Activated B cell treated with CpG ODN at 0.5 μM for 24 hours (primary cell): ENCODE measurements at regions of chr6 and their contacts with region 1.

Region 1: DNA sequence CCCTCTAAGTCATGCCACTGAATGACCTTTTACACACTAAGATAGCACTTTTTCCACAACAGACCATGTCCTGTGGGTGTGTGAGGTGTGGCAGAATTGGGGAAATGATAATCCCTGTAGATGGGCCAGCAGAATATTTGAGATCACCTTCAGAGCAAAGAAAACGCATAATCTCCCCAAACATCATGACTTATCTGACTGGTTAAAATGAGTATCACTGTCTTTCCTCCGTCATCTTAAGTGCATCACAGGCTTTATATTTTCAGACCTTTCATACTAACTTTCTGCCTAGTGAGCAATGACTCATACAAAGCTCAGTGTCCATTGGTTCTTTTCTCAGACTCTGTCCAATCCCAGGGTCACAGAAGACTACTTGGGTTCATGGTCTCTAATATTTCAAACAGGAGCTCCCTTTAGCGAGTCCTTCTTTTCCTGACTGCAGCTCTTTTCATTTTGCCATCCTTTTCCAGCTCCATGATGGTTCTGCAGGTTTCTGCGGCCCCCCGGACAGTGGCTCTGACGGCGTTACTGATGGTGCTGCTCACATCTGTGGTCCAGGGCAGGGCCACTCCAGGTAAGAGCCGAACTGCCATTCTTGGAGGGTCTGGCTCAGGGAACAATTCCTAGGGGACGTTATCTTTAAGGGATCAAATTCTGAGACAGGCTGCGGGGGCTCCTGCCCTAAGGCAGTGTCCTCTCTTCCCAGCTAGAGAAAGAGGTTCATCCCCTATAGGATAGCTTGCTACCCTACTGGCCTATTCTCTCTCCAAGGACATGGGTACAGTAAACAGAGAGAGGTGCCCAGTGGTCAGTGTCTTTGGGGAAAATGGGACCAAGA is at the start of gene HLA-DPB1:
- DNase-seq: peak; percentile 42
- ATAC-seq: peak; percentile 76
- H3K4me3 Mint-ChIP-seq: peak within 1 kb of the TSS; percentile 95
- H3K27ac Mint-ChIP-seq: peak within 1 kb of the TSS; percentile 99
- H3K4me1 Mint-ChIP-seq: peaks cover 66% of the 10 kb centered on the region
- H3K27me3 Mint-ChIP-seq: no peaks in the 10 kb centered on the region
- CTCF ChIP-seq: no peak
- total RNA-seq, gene HLA-DPB1: 853 and 854 TPM in 2 replicates

Region 2: GRCh38 chr6:32568561-32568960 is 507.2 kb before region 1 on chr6:
- CTCF ChIA-PET with region 1: no interaction called
- POLR2A ChIA-PET with region 1: no interaction called
- intact Hi-C with region 1: no loop called
- DNase-seq: no peak
- ATAC-seq: no peak
- H3K4me3 Mint-ChIP-seq: no peak overlapping the region
- H3K27ac Mint-ChIP-seq: no peak overlapping the region
- H3K4me1 Mint-ChIP-seq: peaks cover 4% of the 10 kb centered on the region
- H3K27me3 Mint-ChIP-seq: no peaks in the 10 kb centered on the region
- CTCF ChIP-seq: no peak

Region 3: GRCh38 chr6:33000055-33000454 is 75.7 kb before region 1 on chr6:
- CTCF ChIA-PET with region 1: interaction called, 5 read pairs
- POLR2A ChIA-PET with region 1: interaction called, 19 read pairs
- intact Hi-C with region 1: no loop called
- DNase-seq: no peak
- ATAC-seq: peak; percentile 92
- H3K4me3 Mint-ChIP-seq: peak overlapping the region; percentile 47
- H3K27ac Mint-ChIP-seq: peak overlapping the region; percentile 79
- H3K4me1 Mint-ChIP-seq: peaks cover 12% of the 10 kb centered on the region
- H3K27me3 Mint-ChIP-seq: no peaks in the 10 kb centered on the region
- CTCF ChIP-seq: no peak

Region 4: DNA sequence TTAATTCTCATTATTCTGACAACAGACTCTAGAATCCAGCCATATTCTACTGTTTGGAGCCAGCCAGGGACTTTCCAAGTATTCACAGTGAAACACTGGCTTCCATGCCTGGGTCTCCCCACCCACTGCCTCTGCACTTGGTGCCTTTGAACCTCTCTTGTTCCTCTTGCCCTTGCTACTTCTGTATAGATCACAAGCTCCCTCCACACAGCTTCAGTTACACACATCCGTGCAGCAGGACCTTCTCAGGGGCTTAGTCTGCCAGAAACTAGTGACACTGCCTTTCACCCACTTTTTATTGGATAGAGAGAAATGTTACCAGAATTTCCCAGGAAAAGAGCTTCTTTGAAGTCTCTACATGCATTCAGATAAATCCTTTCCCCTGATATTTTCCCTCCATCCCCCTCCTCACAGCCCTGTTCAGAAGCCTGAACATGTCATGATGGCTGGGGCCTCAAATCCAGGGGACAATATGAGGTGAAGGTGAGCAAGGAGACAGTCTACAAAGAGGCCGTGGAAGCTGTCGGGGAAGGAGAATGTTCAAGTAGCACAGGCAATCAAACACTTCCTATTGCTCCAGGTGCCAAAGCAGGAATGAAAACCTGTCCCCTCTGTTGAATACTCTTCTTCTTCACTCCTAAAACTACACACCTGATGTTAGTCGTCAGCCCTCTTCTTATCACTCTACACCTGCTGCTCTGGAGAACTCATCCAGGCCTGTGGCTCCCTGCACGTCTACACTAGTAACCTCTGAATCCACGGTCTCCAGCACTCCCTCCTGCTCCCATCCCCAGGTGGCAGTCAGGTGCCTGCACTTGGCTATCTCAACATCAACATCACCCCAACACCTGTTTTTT is 46.2 kb before region 1 on chr6:
- CTCF ChIA-PET with region 1: interaction called, 6 read pairs
- POLR2A ChIA-PET with region 1: interaction called, 2,264 read pairs
- intact Hi-C with region 1: loop called (anchors 1 kb)
- DNase-seq: peak; percentile 56
- ATAC-seq: peak; percentile 77
- H3K4me3 Mint-ChIP-seq: peak overlapping the region; percentile 77
- H3K27ac Mint-ChIP-seq: peak overlapping the region; percentile 100
- H3K4me1 Mint-ChIP-seq: peaks cover 81% of the 10 kb centered on the region
- H3K27me3 Mint-ChIP-seq: no peaks in the 10 kb centered on the region
- CTCF ChIP-seq: no peak

Region 5: DNA sequence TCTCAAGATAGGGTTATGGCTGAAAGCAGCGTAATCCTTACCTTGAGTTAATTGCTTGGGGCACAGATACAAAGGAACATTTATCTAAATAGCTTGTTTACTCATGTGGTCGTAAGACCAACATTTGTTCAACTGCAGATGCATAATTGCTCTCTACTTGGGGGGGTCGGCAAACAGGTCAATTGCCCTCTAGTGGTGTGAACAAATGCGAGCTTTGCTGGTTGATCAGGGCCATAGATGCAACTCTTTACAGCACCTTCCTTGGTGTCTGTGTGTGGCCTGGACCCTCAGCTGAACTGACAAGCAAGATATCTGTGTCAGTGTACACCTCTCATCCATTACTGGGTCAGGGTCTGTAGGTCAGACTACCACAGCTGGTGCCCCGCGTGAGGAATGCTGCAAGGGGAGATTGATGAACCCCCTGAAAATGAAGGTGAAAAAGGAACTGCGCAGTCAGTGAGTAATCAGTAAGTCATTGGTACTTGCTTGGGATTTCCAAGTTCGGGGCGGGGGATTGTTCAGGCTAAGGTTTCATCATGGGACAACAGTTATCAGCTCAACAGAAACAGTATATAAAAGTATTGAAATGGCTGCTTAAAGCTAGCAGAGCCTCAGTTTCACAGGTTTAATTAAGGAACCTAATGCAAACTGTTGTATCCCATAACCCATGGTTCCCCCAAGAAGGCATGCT is 26.3 kb before region 1 on chr6:
- CTCF ChIA-PET with region 1: interaction called, 4 read pairs
- POLR2A ChIA-PET with region 1: interaction called, 31 read pairs
- intact Hi-C with region 1: no loop called
- DNase-seq: no peak
- ATAC-seq: no peak
- H3K4me3 Mint-ChIP-seq: no peak overlapping the region
- H3K27ac Mint-ChIP-seq: no peak overlapping the region
- H3K4me1 Mint-ChIP-seq: peaks cover 20% of the 10 kb centered on the region
- H3K27me3 Mint-ChIP-seq: no peaks in the 10 kb centered on the region
- CTCF ChIP-seq: no peak

Region 6: GRCh38 chr6:33091957-33092356 is 16.2 kb after region 1 on chr6:
- CTCF ChIA-PET with region 1: interaction called, 3 read pairs
- POLR2A ChIA-PET with region 1: interaction called, 34 read pairs
- intact Hi-C with region 1: no loop called
- DNase-seq: no peak
- ATAC-seq: peak; percentile 75
- H3K4me3 Mint-ChIP-seq: no peak overlapping the region
- H3K27ac Mint-ChIP-seq: peak overlapping the region; percentile 79
- H3K4me1 Mint-ChIP-seq: peaks cover 47% of the 10 kb centered on the region
- H3K27me3 Mint-ChIP-seq: no peaks in the 10 kb centered on the region
- CTCF ChIP-seq: no peak